ENCODE measurements at regions of chr3 and their contacts with region 1.

Region 1: DNA sequence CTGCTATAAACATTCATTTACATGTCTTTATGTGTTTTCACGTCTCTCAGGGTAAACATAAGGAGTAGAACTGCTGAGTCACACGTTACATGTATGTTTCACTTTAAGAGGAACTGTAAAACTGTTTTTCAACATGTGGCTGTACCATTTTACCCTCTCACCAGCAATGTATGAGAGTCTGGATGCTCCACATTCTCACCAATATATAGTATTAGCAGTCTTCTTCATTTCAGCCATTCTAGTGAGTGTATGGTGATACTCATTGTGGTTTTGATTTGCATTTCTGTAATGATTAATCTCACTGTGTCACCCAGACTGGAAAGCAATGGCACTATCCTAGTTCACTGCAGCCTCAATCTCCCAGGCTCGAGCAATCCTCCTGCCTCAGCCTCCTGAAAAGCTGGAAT is 37.1 kb downstream of the PHC3 start:
- DNase-seq: no peak
- ATAC-seq: no peak
- H3K4me3 ChIP-seq: no peak overlapping the region
- H3K27ac ChIP-seq: no peak overlapping the region
- H3K4me1 ChIP-seq: no peaks in the 10 kb centered on the region
- H3K27me3 ChIP-seq: no peaks in the 10 kb centered on the region
- CTCF ChIP-seq: no peak
- POLR2A ChIP-seq: no peak
- RAD21 ChIP-seq: no peak

Region 2: DNA sequence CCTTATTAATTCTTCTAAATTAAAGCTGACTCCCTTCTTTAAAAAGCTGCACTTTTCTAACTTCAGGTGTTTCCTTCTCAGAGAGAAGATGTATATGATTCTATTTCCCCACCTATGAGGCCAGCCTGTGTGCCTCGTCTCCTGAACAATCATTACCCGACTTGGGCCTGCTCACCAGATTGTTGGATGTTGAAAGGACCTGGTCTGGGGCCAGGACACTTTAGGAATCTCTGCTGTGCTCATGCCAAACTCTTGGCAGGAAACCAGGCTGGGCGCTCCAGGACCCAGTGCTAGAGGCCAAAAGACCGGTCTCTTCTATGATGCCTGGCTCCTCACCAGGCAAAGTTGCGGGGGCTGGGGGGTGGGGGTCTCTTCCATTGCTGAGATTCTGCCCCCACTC is 257.8 kb before region 1 on chr3:
- CTCF ChIA-PET with region 1: no interaction called
- POLR2A ChIA-PET with region 1: no interaction called
- dilution Hi-C with region 1: no loop called
- in situ Hi-C with region 1: no loop called
- intact Hi-C with region 1: no loop called
- DNase-seq: peak; percentile 35
- ATAC-seq: peak; percentile 67
- H3K4me3 ChIP-seq: no peak overlapping the region
- H3K27ac ChIP-seq: no peak overlapping the region
- H3K4me1 ChIP-seq: no peaks in the 10 kb centered on the region
- H3K27me3 ChIP-seq: no peaks in the 10 kb centered on the region
- CTCF ChIP-seq: no peak
- POLR2A ChIP-seq: no peak
- RAD21 ChIP-seq: no peak

Region 3: GRCh38 chr3:170117134-170117533 is 27.3 kb before region 1 on chr3:
- CTCF ChIA-PET with region 1: interaction called, 4 read pairs
- POLR2A ChIA-PET with region 1: interaction called, 12 read pairs
- dilution Hi-C with region 1: no loop called
- in situ Hi-C with region 1: no loop called
- intact Hi-C with region 1: no loop called
- DNase-seq: no peak
- ATAC-seq: no peak
- H3K4me3 ChIP-seq: no peak overlapping the region
- H3K27ac ChIP-seq: no peak overlapping the region
- H3K4me1 ChIP-seq: no peaks in the 10 kb centered on the region
- H3K27me3 ChIP-seq: no peaks in the 10 kb centered on the region
- CTCF ChIP-seq: 0 out of 2 replicates have a peak, but pooled peaks have one; percentile 9
- POLR2A ChIP-seq: no peak
- RAD21 ChIP-seq: no peak

Region 4: GRCh38 chr3:170531657-170532335 is 387.4 kb after region 1 on chr3:
- CTCF ChIA-PET with region 1: no interaction called
- POLR2A ChIA-PET with region 1: no interaction called
- dilution Hi-C with region 1: no loop called
- in situ Hi-C with region 1: no loop called
- intact Hi-C with region 1: no loop called
- DNase-seq: no peak
- ATAC-seq: no peak
- H3K4me3 ChIP-seq: no peak overlapping the region
- H3K27ac ChIP-seq: no peak overlapping the region
- H3K4me1 ChIP-seq: no peaks in the 10 kb centered on the region; the same call in 1 of the 2 replicates
- H3K27me3 ChIP-seq: no peaks in the 10 kb centered on the region; the same call in 1 of the 2 replicates
- CTCF ChIP-seq: no peak
- POLR2A ChIP-seq: no peak
- RAD21 ChIP-seq: no peak

Measured in IMR-90 (cell line).